ENCODE measurements at regions of chr20 and their contacts with region 1.

Region 1: GRCh38 chr20:4720041-4720976 is 1.4 kb upstream of the PRND start:
- DNase-seq: peak; percentile 88
- ATAC-seq: peak; percentile 93
- H3K4me3 Mint-ChIP-seq: no peak overlapping the region
- H3K27ac Mint-ChIP-seq: peak overlapping the region; percentile 40
- H3K4me1 Mint-ChIP-seq: peaks cover 7% of the 10 kb centered on the region
- H3K27me3 Mint-ChIP-seq: no peaks in the 10 kb centered on the region

Region 2: DNA sequence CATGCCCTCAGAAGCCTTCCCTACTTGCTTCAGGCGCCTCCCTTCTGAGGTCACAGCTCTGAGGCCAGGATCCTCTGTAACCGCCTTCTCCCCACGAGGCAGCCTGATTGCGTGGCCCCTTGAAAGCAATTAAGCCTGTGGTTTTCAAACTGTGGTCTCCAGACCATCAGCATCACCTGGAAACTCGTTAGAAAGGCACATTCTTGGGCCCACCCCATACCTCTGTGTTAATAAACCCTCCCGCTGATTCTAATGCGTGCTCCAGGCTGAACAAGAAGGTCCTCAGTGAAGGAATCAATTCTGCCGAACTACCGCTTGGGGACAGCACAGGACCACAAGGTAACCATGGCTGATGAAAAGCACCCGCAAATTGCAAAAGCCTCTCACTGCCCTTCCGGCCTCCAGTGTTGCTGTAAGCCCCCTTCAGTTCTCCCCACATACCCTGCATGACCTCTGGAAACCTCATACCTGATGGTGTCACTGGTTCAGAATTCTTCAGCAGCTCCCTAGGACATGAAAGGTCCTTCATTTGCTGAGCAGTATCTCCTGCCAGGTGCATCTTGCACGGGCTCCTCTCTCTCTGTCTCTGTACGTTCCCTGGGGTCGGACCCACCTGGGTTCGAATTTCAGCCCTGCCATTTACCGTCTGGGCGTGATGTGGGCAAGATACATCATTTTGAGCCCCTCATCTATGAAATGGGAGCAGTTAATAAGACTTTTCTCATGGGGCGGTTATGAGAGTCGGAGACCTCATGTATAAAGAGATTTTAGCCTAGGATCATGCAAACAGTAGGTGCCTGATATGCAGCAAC is 611.6 kb before region 1 on chr20:
- CTCF ChIA-PET with region 1: no interaction called
- POLR2A ChIA-PET with region 1: no interaction called
- intact Hi-C with region 1: loop called in 1 of 2 experiments (anchors 1 kb)
- DNase-seq: peak; percentile 83
- ATAC-seq: peak; percentile 89
- H3K4me3 Mint-ChIP-seq: peak overlapping the region; percentile 14
- H3K27ac Mint-ChIP-seq: peak overlapping the region; percentile 82
- H3K4me1 Mint-ChIP-seq: peaks cover 17% of the 10 kb centered on the region
- H3K27me3 Mint-ChIP-seq: no peaks in the 10 kb centered on the region

Region 3: GRCh38 chr20:4601630-4602296 is 118.5 kb before region 1 on chr20:
- CTCF ChIA-PET with region 1: interaction called, 193 read pairs
- POLR2A ChIA-PET with region 1: no interaction called
- intact Hi-C with region 1: no loop called
- DNase-seq: no peak
- ATAC-seq: no peak
- H3K4me3 Mint-ChIP-seq: no peak overlapping the region
- H3K27ac Mint-ChIP-seq: no peak overlapping the region
- H3K4me1 Mint-ChIP-seq: no peaks in the 10 kb centered on the region
- H3K27me3 Mint-ChIP-seq: peaks cover 18% of the 10 kb centered on the region

Region 4: DNA sequence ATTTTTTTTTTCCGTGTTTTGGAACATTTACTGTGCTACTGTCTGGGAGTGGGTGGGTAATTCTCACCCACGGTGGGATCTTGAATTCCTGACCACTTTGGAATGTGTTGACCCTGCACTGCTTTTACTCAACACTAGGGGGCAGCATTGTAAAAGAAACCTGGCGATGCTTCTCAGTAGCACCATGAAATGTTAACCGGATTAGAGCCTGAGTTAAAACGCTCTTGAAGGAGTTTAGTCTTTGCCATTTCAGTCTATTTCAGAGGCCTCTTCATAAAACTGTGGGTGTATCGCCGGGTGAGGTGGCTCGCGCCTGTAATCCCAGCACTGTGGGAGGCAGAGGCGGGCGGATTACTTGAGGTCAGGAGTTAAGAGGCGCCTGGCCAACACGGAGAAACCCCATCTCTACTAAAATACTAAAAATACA is 113.0 kb before region 1 on chr20:
- CTCF ChIA-PET with region 1: interaction called, 193 read pairs
- POLR2A ChIA-PET with region 1: interaction called, 4 read pairs
- intact Hi-C with region 1: loop called (anchors 1 kb)
- DNase-seq: peak; percentile 69
- ATAC-seq: peak; percentile 90
- H3K4me3 Mint-ChIP-seq: no peak overlapping the region
- H3K27ac Mint-ChIP-seq: no peak overlapping the region
- H3K4me1 Mint-ChIP-seq: peaks cover 2% of the 10 kb centered on the region
- H3K27me3 Mint-ChIP-seq: peaks cover 5% of the 10 kb centered on the region

Region 5: DNA sequence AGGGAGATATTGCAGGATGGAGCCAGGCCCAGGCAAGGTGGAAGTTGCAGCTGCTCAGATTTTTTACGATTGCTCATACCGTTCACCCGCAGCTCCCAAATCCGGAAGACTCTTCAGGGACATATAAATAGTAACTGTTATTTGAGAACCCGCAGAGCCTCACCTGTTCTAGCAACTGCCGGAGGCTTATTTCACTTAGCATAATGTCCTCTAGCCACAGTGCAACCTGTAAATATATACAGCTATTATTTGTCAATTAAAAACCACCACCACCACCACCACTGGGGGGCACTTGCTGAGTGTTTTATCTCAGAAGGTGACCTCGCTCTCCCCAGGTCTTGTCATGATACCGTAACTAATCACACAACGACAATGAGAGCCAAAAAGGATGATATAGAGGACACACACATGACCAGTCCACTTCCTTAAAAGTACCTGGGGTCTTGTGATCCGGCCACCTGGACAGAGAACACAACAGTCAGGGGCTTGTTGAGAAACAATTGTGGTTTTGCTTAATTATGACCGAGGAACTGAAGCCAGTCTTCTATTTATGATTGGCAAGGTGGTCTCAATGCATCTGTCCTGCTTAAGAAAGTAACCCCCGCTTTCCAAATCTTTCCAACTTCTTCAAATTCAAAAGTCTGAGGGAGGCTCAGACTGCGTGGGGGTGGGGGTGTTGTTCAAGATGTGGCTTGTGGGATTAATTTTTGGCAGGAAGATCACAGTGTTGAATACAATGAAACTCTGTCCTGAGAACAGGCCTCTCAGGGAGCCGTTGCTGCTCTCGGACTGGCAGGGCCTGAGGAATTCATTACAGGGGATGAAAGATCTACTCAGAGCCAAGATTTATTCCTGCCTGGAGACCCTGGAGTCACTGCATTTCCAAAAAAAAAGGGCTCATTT is 106.3 kb before region 1 on chr20:
- CTCF ChIA-PET with region 1: interaction called, 193 read pairs
- POLR2A ChIA-PET with region 1: no interaction called
- intact Hi-C with region 1: loop called (anchors 1 kb)
- DNase-seq: peak; percentile 82
- ATAC-seq: peak; percentile 86
- H3K4me3 Mint-ChIP-seq: no peak overlapping the region
- H3K27ac Mint-ChIP-seq: no peak overlapping the region
- H3K4me1 Mint-ChIP-seq: no peaks in the 10 kb centered on the region
- H3K27me3 Mint-ChIP-seq: peaks cover 2% of the 10 kb centered on the region

Region 6: DNA sequence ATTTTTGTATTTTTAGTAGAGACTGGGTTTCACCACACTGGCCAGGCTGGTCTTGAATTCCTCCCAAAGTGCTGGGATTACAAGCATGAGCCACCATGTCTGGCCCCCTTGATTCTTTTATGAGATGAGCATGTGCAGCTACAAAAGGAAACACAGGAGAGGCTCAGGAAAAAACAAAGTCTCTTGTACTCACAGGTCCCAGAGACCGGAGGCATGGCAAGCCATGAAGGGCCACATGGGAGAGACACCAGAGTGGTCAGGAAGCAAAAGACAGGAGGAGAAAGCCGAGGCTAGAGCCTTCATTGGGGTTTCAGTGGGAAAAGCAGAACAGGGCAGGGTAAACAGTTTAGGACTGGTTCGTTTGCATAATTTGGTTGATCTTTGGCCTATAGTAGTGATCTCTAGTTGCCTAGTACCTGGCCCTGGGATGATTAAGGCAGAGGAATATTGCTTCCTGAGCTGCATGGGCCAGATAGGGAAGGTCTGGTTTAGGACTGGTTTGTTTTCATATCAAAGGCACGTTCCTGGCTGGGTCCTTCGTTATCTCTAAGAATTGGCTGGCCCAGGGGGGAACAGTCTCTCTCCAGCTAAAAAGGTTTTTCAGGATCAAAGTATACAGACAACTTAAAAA is 46.8 kb before region 1 on chr20:
- CTCF ChIA-PET with region 1: no interaction called
- POLR2A ChIA-PET with region 1: no interaction called
- intact Hi-C with region 1: no loop called
- DNase-seq: no peak
- ATAC-seq: no peak
- H3K4me3 Mint-ChIP-seq: no peak overlapping the region
- H3K27ac Mint-ChIP-seq: no peak overlapping the region
- H3K4me1 Mint-ChIP-seq: peaks cover 8% of the 10 kb centered on the region
- H3K27me3 Mint-ChIP-seq: no peaks in the 10 kb centered on the region